ENCODE measurements at regions of chr7 and their contacts with region 1.

Region 1: DNA sequence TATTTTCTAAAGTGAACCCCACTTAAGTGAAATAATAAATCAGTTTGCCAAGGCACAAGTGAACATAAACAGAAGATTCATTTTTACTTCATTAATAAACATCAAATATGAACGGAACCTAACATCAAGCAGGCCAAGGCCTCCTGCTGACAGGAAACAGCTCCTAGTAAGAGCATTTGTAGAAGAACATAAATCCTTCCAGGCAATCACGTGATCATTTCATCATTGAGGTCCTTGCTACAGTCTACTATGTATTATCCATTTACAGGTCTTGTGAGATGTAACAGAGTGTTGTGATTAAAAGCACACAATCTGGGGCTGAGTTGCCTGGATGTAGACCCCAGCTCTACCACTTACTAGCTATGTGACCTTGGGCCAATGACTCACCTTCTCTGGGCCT is 70.6 kb downstream of the CALD1 start:
- DNase-seq: peak in 2 of 3 donors; percentile 27 to 54
- H3K4me3 ChIP-seq: no peak overlapping the region
- H3K27ac ChIP-seq: no peak overlapping the region
- H3K4me1 ChIP-seq: peaks cover 2 to 13% (median 7%) of the 10 kb centered on the region in 4 experiments
- H3K27me3 ChIP-seq: no peaks in the 10 kb centered on the region

Region 2: DNA sequence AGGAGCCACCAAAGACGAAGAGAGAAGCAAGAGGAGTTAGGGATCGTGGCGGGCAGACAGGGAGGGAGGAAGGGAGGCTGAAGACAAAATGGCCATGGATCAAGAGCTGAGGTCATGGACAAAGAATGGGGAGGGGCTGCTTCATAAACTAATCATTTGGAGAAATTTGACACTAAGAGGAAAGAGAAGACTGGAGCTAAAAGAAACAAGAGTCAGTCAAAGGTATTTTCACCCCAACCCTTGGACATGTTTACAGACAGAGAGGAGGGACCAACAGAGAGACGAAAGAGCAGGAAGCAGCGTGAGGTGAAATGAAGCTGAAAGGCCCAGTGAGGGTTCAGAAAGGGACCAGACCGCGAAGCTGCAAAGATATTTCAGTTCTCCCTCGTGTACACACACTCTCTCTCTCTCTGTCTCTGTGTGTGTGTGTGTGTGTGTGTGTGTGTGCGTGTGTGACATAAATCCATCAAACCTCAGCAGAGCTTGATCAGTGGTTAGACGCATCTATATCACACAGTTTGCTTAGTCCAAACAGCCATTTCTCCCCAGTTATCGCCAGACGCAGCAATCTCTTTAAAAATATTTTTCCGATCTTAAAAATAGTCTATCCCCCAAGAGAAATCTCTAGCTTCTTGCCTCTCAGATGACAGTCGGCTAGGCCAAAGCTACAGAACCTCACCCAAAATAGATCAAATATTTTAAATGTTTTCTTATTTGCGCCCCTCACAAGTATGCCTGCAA is 83.1 kb before region 1 on chr7:
- CTCF ChIA-PET with region 1: no interaction called
- POLR2A ChIA-PET with region 1: interaction called, 11 read pairs
- DNase-seq: peak in 2 of 3 donors; percentile 1 to 13
- H3K4me3 ChIP-seq: no peak overlapping the region
- H3K27ac ChIP-seq: no peak overlapping the region
- H3K4me1 ChIP-seq: peaks cover 0 to 7% (median 0%) of the 10 kb centered on the region in 4 experiments
- H3K27me3 ChIP-seq: peaks cover 0 to 2% (median 0%) of the 10 kb centered on the region in 5 experiments

Region 3: DNA sequence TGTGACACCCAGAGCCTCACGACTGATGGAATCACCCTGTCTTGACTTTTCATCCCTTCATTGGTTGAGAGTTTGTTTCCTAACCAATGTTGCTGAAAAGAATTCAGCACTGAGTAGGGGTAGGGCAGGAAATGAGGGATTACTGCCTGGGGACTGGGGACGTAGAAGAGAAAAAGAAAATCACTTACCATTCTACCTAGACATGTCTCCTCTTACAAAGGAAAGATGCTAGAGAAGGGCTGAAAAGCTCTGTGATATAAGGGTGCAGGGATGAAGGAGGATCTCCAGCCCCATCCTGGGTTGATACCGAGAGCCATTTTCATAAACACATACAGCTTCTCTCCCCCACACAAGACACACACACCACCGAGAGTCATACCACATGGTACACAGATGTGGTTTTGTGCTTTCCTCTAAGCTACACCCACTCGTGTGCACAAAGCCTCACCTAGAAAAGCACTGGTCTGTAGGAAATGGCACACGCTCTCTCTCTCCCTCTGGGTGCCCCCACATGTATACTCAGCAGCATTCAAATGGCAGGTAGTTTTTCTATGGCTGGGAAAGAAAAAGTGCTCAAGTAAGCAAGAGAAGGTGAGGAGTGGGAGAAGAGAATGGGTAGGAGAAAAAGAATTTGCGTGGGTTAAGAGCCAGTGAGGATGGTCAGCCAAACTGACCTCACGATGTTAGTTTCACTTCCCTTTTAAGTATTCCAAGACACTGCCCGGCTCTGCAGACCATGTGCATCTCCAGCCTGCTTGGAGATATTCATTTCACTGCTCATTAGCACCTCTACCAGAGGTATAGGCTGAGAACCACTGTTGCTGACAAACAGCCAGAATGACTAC is 15.2 kb after region 1 on chr7:
- CTCF ChIA-PET with region 1: no interaction called
- POLR2A ChIA-PET with region 1: no interaction called
- DNase-seq: no peak
- H3K4me3 ChIP-seq: no peak overlapping the region
- H3K27ac ChIP-seq: no peak overlapping the region
- H3K4me1 ChIP-seq: peaks cover 0 to 6% (median 0%) of the 10 kb centered on the region in 4 experiments
- H3K27me3 ChIP-seq: no peaks in the 10 kb centered on the region